Mammary epithelial cell (primary cell): ENCODE measurements at regions of chr13 and their contacts with region 1.

Region 1: DNA sequence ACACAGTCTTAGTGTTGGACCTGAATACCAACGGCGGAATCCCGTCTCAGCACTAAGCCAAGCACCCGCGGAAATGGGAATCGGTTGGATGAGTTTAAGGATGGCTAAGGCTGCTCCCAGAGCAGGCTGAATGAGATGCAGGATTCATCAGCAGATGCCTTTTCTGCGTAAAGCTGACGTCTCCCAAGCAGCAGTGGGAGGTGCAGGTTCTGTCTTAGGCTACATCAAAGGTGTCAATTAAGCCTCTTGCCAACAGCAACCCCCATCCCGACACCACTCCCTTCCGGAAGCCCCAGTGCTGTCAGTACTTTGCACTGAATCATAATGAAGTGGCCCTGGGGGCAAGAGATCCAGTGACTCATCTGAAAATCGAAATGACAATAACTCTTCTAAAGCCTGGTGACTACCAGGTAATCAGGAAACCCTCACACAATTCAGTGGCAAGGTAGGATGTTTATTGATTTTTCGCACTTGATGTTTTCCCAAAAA is 275.6 kb downstream of the DCLK1 start:
- DNase-seq: peak; percentile 78
- H3K4me3 ChIP-seq: no peak overlapping the region
- H3K27ac ChIP-seq: no peak overlapping the region
- H3K4me1 ChIP-seq: peaks cover 20% of the 10 kb centered on the region
- H3K27me3 ChIP-seq: no peaks in the 10 kb centered on the region
- CTCF ChIP-seq: no peak

Region 2: DNA sequence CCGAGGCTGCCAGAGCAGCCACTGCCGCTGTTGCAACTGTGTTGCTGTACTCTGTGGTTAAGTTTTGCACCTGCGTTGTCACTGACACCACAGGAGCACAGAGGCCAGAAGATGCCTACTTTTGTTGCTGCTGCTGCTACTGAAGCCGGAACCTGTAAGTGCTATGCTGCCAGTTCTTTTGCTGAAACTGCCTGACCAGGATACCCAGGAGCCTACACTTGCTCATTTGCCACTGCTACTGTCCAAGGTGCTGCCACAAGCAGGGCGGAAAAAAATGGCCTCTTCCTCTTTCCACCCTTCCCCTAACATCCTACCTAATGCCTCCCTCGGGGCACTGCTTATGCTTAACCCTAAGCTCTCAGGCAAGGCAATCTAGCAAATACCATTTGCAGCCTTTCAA is 942.5 kb before region 1 on chr13:
- CTCF ChIA-PET with region 1: no interaction called
- dilution Hi-C with region 1: no loop called
- in situ Hi-C with region 1: no loop called
- intact Hi-C with region 1: no loop called
- DNase-seq: no peak
- H3K4me3 ChIP-seq: no peak overlapping the region
- H3K27ac ChIP-seq: no peak overlapping the region
- H3K4me1 ChIP-seq: no peaks in the 10 kb centered on the region
- H3K27me3 ChIP-seq: peaks cover 2% of the 10 kb centered on the region
- CTCF ChIP-seq: no peak

Region 3: DNA sequence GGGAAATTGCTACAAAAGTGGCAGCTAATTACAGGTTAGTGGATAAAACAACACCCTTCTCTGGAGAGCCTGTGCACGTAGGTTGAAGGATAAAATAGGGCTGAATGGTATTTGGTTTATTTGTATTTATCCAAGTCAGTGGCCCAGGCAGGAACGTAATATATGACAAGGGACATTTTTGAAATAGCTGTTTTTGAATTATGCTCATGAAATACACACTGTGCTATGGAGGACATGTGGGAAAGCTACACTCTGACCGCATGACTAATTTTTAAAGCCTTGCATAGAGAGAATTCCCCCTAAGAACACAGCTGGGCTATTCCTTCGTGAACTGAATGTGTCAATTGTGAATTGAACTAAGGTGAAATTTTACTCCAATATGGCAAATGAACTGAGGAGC is 87.0 kb before region 1 on chr13:
- CTCF ChIA-PET with region 1: no interaction called
- dilution Hi-C with region 1: no loop called
- in situ Hi-C with region 1: no loop called
- intact Hi-C with region 1: no loop called
- DNase-seq: no peak
- H3K4me3 ChIP-seq: no peak overlapping the region
- H3K27ac ChIP-seq: no peak overlapping the region
- H3K4me1 ChIP-seq: no peaks in the 10 kb centered on the region
- H3K27me3 ChIP-seq: no peaks in the 10 kb centered on the region
- CTCF ChIP-seq: no peak

Region 4: GRCh38 chr13:35866801-35867200 is 11.2 kb after region 1 on chr13:
- CTCF ChIA-PET with region 1: interaction called, 12 read pairs
- dilution Hi-C with region 1: no loop called
- in situ Hi-C with region 1: no loop called
- intact Hi-C with region 1: no loop called
- DNase-seq: no peak
- H3K4me3 ChIP-seq: no peak overlapping the region
- H3K27ac ChIP-seq: no peak overlapping the region
- H3K4me1 ChIP-seq: no peaks in the 10 kb centered on the region
- H3K27me3 ChIP-seq: no peaks in the 10 kb centered on the region
- CTCF ChIP-seq: no peak

Region 5: DNA sequence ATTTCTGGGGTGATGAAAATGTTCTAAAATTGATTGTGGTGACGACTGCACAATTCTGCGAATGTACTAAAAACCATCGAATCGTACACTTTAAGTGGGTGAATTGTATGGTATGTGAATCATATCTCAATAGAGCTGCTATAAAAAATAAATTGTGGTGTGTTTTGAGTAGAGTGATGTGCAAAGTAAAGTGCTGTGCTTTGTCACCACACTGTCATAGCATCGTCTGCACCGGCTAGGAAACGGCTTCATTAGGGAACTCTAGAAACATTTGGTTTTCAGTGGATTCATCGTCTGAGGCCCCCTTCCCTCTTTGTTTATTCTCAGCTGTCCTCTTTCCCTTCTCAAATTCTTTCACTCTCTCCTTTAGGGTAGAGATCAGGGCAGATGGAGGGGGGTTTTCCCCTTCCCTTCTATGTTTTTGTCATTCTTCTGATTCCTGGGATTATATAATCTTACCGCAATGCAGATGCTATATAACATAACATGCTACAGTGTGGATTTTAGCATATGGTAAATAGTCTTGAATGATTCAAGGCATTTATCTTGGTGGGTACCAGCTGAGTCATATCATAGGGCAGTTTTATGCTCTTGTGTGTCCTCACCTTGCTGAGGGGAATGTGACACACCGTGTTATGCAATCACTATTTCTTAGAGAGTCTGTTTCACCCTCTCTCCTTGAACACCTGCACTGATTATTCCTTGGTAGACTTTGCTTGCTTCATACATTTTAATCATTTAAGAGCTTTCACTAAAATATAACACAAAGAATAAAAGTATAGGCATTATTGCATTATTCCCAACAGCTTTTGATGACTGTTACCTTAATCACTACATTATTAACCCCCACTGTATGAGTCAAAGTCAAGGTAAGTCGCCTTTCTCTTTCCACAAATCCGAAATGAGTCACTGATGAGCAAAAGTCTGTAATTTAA is 36.2 kb after region 1 on chr13:
- CTCF ChIA-PET with region 1: no interaction called
- dilution Hi-C with region 1: no loop called
- in situ Hi-C with region 1: no loop called
- intact Hi-C with region 1: loop called (anchors 5 kb)
- DNase-seq: peak; percentile 95
- H3K4me3 ChIP-seq: no peak overlapping the region
- H3K27ac ChIP-seq: peak overlapping the region; percentile 5
- H3K4me1 ChIP-seq: peaks cover 21% of the 10 kb centered on the region
- H3K27me3 ChIP-seq: no peaks in the 10 kb centered on the region
- CTCF ChIP-seq: no peak

Region 6: DNA sequence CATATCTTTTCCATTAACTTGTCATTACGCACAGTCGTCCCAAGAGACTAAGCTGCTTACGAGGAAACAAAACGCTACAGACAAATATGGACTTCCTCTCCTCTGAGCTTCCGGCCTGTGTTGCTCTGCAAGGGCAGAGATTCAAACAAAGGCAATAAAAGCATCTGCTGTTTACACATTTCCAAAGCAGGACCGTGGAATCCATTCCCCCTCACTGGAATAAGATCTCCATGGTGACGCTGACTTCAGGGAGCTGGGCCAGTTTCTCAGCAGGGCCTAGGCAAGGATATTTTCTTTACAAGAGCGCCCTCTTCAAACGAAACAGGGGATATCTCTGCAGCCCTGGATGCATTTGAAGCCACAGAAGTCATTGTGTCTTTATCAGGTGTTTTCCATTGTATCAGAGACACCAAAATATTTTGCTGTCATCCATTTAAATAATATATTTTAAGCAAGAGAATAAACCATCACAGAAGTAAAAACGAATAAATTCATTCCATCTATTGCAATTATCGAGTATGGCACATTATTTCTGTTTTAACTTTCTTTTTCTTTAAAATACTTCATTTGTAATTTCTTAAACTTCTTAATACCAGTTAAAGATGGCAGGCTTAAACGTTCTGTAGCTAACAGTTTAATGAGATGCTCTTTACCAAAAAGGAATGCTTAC is 98.1 kb after region 1 on chr13:
- CTCF ChIA-PET with region 1: no interaction called
- dilution Hi-C with region 1: no loop called
- in situ Hi-C with region 1: no loop called
- intact Hi-C with region 1: loop called (anchors 10 kb)
- DNase-seq: peak; percentile 38
- H3K4me3 ChIP-seq: no peak overlapping the region
- H3K27ac ChIP-seq: no peak overlapping the region
- H3K4me1 ChIP-seq: no peaks in the 10 kb centered on the region
- H3K27me3 ChIP-seq: no peaks in the 10 kb centered on the region
- CTCF ChIP-seq: peak; percentile 42 to 66